Activated naive CD4-positive, alpha-beta T cell treated with anti-CD3 and anti-CD28 coated beads for 36 hours (primary cell): ENCODE measurements at regions of chr4 and their contacts with region 1.

Region 1: DNA sequence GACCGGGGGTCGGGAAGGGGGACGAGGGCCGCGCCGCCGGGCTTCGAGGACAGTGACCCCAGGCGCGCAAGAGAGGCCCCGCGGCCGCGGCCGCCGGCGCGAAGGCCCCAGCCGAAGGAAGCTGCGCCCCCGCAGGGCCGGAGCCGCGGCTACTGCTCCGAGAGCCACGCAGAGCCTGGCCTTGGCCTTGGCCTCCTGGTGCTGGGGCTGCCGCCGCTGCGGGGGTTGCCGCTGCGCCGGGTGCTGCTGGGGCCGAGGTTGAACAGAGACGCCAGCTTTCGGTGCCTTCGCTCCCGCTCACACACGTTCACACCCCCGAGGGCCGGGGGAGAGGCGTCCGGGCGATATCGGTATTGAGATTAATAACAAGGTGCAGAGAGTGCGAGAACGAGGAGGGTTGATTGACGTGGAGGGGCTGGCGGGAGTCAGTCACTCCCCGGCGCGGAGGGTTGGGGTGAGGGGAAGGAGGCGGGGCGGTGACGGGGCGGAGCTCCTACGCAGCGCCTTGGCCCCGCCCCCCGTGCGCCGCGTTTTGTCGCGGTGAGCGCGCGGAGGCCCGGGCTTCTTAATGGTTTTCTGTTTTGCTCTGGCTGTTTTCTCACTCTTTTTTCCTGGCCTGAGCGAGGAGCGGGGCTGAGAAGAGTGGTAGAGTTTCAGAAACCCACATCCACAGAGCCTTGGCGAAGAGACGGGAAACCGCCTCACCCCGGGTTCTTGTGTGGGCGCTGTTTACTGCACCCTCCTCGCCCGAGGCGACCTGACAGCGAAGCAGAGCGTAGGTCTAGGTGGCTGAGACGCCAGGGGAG is 878 bp upstream of the CNOT6L start:
- DNase-seq: peak; percentile 97
- H3K4me3 Mint-ChIP-seq: peak overlapping the region; percentile 97
- H3K27ac Mint-ChIP-seq: peak overlapping the region; percentile 98
- H3K4me1 Mint-ChIP-seq: peaks cover 44% of the 10 kb centered on the region
- H3K27me3 Mint-ChIP-seq: no peaks in the 10 kb centered on the region

Region 2: GRCh38 chr4:76969941-76970529 is 850.0 kb before region 1 on chr4:
- CTCF ChIA-PET with region 1: no interaction called
- intact Hi-C with region 1: no loop called
- DNase-seq: no peak
- H3K4me3 Mint-ChIP-seq: no peak overlapping the region
- H3K27ac Mint-ChIP-seq: no peak overlapping the region
- H3K4me1 Mint-ChIP-seq: peaks cover 5% of the 10 kb centered on the region
- H3K27me3 Mint-ChIP-seq: no peaks in the 10 kb centered on the region

Region 3: GRCh38 chr4:77586951-77587383 is 233.1 kb before region 1 on chr4:
- CTCF ChIA-PET with region 1: no interaction called
- intact Hi-C with region 1: loop called (anchors 1 kb)
- DNase-seq: peak; percentile 87
- H3K4me3 Mint-ChIP-seq: peak overlapping the region; percentile 17
- H3K27ac Mint-ChIP-seq: peak overlapping the region; percentile 80
- H3K4me1 Mint-ChIP-seq: peaks cover 49% of the 10 kb centered on the region
- H3K27me3 Mint-ChIP-seq: peaks cover 15% of the 10 kb centered on the region

Region 4: DNA sequence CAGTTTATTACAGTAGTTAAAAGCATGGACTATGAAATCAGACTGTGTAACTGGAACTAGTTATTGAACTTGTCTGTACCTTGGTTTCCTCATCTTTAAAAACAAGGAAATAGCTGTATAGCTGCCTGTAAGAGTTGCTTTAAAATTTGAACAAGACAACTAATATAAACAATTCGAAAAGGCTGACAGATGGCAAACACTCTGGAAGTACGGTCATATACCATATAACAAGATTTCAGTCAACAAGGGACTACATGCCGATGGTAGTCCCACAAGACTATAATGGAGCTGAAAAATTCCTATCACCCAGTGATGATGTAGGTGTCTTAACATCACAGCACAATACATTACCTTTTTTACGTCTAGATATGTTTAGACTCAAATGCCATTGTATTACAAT is 79.6 kb before region 1 on chr4:
- CTCF ChIA-PET with region 1: no interaction called
- intact Hi-C with region 1: loop called (anchors 2 kb)
- DNase-seq: no peak
- H3K4me3 Mint-ChIP-seq: no peak overlapping the region
- H3K27ac Mint-ChIP-seq: no peak overlapping the region
- H3K4me1 Mint-ChIP-seq: peaks cover 38% of the 10 kb centered on the region
- H3K27me3 Mint-ChIP-seq: no peaks in the 10 kb centered on the region

Region 5: DNA sequence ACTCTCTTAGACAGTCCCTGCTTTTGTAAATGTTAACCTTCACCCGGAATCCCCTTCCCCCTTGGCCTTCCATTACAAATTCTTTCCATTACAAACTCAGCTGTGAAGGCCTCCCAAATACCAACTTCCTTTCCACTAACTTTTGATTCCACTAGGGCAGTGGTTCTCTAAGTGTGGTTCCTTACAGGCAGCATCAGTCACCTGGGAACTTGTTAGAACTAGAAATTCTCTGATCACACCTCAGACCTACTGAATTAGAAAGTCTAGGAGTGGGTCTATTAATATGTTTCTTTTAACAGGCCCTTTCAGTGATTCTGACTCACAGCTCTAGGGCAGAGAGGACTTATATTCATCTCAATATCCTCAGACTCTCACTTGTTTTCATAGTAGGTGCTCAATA is 23.6 kb after region 1 on chr4:
- CTCF ChIA-PET with region 1: interaction called, 4 read pairs
- intact Hi-C with region 1: loop called (anchors 1 kb)
- DNase-seq: no peak
- H3K4me3 Mint-ChIP-seq: no peak overlapping the region
- H3K27ac Mint-ChIP-seq: peak overlapping the region; percentile 16
- H3K4me1 Mint-ChIP-seq: peaks cover 22% of the 10 kb centered on the region
- H3K27me3 Mint-ChIP-seq: no peaks in the 10 kb centered on the region

Region 6: GRCh38 chr4:78056265-78057129 is 236.5 kb after region 1 on chr4:
- CTCF ChIA-PET with region 1: no interaction called
- intact Hi-C with region 1: loop called (anchors 5 kb)
- DNase-seq: peak; percentile 50
- H3K4me3 Mint-ChIP-seq: peak overlapping the region; percentile 65
- H3K27ac Mint-ChIP-seq: no peak overlapping the region
- H3K4me1 Mint-ChIP-seq: peaks cover 21% of the 10 kb centered on the region
- H3K27me3 Mint-ChIP-seq: peaks cover 41% of the 10 kb centered on the region